K562 (cell line): ENCODE measurements at regions of chr5 and their contacts with region 1.

Region 1: DNA sequence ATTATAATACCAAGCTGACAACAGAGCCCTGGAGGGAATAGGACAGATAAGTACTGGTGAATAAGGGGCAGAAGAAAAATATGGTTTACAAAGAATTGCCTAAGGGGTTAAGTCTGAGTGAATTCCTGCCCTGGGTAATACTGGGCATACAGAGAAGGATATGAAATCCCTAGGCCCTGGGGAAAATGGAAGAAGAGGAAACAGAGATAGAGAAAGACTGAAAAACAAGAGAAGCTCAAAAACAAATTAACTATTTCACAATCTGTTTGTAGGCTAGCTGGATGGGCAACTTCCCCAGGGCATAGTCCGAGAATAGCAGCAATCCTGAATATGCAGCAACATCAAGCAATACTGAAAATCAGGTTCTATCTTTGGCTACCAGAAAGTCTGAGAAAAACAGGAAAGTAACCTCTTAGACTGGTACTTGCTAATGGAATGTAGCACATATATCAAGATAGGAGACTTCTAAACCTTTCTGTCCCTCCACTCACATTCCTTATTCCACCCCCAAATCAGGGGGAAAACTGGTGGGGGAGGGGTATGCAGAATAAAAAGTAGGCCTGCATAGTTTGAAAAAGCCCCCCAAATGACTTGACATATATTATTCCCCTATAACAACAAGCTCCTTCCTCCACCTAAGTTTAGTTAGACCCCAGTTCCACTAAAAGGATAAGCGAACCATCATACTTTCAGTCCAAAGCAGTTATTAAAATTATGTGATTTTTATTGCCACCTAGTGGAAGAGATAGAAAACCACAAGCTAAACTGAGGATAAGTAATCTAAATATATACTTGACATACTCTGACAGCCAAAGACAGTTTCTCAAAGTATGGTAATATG is 20.6 kb downstream of the SLC38A9 start:
- DNase-seq: peak; percentile 17 to 28 (median 18)
- ATAC-seq: peak; percentile 64
- H3K4me3 ChIP-seq: no peak overlapping the region
- H3K27ac ChIP-seq: no peak overlapping the region
- H3K4me1 ChIP-seq: no peaks in the 10 kb centered on the region
- H3K27me3 ChIP-seq: no peaks in the 10 kb centered on the region
- CTCF ChIP-seq: peak in 2 of 3 experiments; percentile 42 to 61; a peak in 3 of 6 replicates
- EP300 ChIP-seq: no peak
- POLR2A ChIP-seq: no peak
- RAD21 ChIP-seq: peak; percentile 56 to 67

Region 2: GRCh38 chr5:55172051-55172899 is 519.2 kb before region 1 on chr5:
- CTCF ChIA-PET with region 1: interaction called, 11 read pairs
- POLR2A ChIA-PET with region 1: interaction called, 3 read pairs
- in situ Hi-C with region 1: loop called (anchors 10 kb)
- intact Hi-C with region 1: loop called (anchors 2 kb)
- DNase-seq: peak; percentile 73 to 86 (median 76)
- ATAC-seq: peak; percentile 74
- H3K4me3 ChIP-seq: peak overlapping the region; percentile 46
- H3K27ac ChIP-seq: no peak overlapping the region
- H3K4me1 ChIP-seq: peaks cover 11 to 22% of the 10 kb centered on the region in 2 experiments
- H3K27me3 ChIP-seq: peaks cover 0 to 2% of the 10 kb centered on the region in 2 experiments; a peak in 3 of 5 replicates
- CTCF ChIP-seq: peak; percentile 75 to 91 (median 81)
- EP300 ChIP-seq: no peak
- POLR2A ChIP-seq: no peak
- RAD21 ChIP-seq: peak; percentile 93 to 94

Region 3: DNA sequence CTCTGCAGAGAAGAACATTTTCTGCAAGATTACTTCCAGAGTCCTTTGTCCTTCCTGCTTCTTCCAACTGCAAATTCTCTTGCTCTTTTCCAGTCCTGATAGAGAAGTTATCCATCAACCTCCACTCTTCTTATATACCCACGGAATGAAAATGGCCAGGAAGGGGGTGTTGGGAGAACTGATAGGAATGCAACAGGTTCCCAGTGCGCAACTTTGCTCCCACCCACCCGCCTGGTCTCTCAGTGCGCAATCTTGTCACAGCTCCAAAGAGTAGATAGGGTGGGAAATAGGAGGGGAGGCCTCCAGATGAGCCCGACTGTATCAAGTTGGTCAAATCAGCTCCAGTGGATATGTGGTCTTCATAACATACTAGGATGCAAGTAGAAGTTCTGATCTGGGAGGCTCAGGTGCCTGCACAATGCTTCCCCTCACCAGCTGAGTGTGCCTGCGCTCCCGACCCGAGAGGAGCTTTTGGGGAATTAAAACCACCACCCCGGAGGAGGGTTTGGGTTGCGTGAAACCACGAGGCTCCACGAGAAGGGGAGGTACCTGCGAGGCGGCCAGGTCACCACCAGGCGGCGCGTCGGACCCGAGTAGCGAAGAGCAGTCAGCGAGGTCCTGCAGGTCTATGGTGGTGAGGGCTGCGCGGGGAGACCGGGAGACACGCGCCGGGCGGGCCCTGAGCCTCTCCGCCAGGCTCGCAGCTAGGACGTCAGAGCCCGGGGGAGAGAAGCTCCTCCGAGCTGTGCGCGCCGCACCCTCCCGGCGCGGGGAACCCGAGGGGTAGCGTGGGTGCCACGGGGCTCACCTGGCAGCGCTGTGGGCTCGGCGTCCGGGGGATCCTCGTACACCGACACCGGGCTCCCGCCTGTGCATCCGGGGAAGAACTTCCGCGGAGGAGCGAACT is 465.2 kb before region 1 on chr5:
- CTCF ChIA-PET with region 1: interaction called, 6 read pairs
- POLR2A ChIA-PET with region 1: no interaction called
- in situ Hi-C with region 1: no loop called
- intact Hi-C with region 1: loop called (anchors 2 kb)
- DNase-seq: peak; percentile 83 to 90 (median 88)
- ATAC-seq: peak; percentile 93
- H3K4me3 ChIP-seq: peak overlapping the region; percentile 71
- H3K27ac ChIP-seq: peak overlapping the region; percentile 55; the same call in 1 of the 3 replicates
- H3K4me1 ChIP-seq: peaks cover 6 to 25% of the 10 kb centered on the region in 2 experiments; a peak in 3 of 5 replicates
- H3K27me3 ChIP-seq: peaks cover 9 to 12% of the 10 kb centered on the region in 2 experiments; a peak in 4 of 5 replicates
- CTCF ChIP-seq: peak; percentile 83 to 92 (median 88)
- EP300 ChIP-seq: no peak
- POLR2A ChIP-seq: peak; percentile 53; the same call in 1 of the 2 replicates
- RAD21 ChIP-seq: peak; percentile 51 to 83

Region 4: GRCh38 chr5:55324815-55325418 is 366.6 kb before region 1 on chr5:
- CTCF ChIA-PET with region 1: interaction called, 6 read pairs
- POLR2A ChIA-PET with region 1: no interaction called
- in situ Hi-C with region 1: no loop called
- intact Hi-C with region 1: loop called (anchors 5 kb)
- DNase-seq: peak in 2 of 4 experiments; percentile 22 to 36
- ATAC-seq: peak; percentile 77
- H3K4me3 ChIP-seq: no peak overlapping the region
- H3K27ac ChIP-seq: no peak overlapping the region
- H3K4me1 ChIP-seq: no peaks in the 10 kb centered on the region
- H3K27me3 ChIP-seq: no peaks in the 10 kb centered on the region
- CTCF ChIP-seq: peak; percentile 21 to 66 (median 28); a peak in 4 of 6 replicates
- EP300 ChIP-seq: no peak
- POLR2A ChIP-seq: no peak
- RAD21 ChIP-seq: peak; percentile 64 to 68

Region 5: GRCh38 chr5:55344392-55344992 is 347.0 kb before region 1 on chr5:
- CTCF ChIA-PET with region 1: interaction called, 5 read pairs
- POLR2A ChIA-PET with region 1: no interaction called
- in situ Hi-C with region 1: no loop called
- intact Hi-C with region 1: loop called (anchors 5 kb)
- DNase-seq: peak; percentile 30 to 66 (median 42)
- ATAC-seq: peak; percentile 68; the same call in 2 of the 3 replicates
- H3K4me3 ChIP-seq: no peak overlapping the region
- H3K27ac ChIP-seq: no peak overlapping the region
- H3K4me1 ChIP-seq: no peaks in the 10 kb centered on the region
- H3K27me3 ChIP-seq: no peaks in the 10 kb centered on the region
- CTCF ChIP-seq: peak; percentile 54 to 65 (median 64); a peak in 5 of 6 replicates
- EP300 ChIP-seq: no peak
- POLR2A ChIP-seq: no peak
- RAD21 ChIP-seq: peak in 1 of 2 experiments; percentile 53; a peak in 3 of 4 replicates

Region 6: GRCh38 chr5:55407059-55407684 is 284.3 kb before region 1 on chr5:
- CTCF ChIA-PET with region 1: interaction called, 8 read pairs
- POLR2A ChIA-PET with region 1: no interaction called
- in situ Hi-C with region 1: no loop called
- intact Hi-C with region 1: loop called (anchors 5 kb)
- DNase-seq: peak in 2 of 4 experiments; percentile 18 to 20
- ATAC-seq: peak; percentile 72
- H3K4me3 ChIP-seq: no peak overlapping the region
- H3K27ac ChIP-seq: no peak overlapping the region
- H3K4me1 ChIP-seq: no peaks in the 10 kb centered on the region
- H3K27me3 ChIP-seq: no peaks in the 10 kb centered on the region
- CTCF ChIP-seq: peak in 2 of 3 experiments; percentile 37 to 39; a peak in 4 of 6 replicates
- EP300 ChIP-seq: no peak
- POLR2A ChIP-seq: no peak
- RAD21 ChIP-seq: peak; percentile 47 to 52

Region 7: DNA sequence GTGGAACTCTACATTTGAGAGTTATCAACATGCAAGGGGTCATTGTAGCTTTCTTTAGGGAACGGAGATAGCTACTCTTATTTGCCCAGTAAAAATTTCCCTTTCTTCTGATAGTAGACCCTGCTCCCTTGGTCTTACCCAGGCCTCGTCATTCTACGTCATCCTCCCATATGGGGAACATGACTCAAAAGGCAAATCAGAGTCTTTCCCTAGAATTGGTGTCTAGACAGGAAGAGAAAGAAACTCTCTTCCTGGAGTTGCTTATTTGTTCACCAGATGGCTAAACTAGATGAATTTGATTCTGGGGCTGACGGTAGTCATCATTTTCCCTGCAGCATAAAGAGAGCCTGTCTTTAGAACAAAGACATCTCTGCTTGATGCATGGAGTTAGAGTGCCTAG is 32.8 kb after region 1 on chr5:
- CTCF ChIA-PET with region 1: no interaction called
- POLR2A ChIA-PET with region 1: no interaction called
- in situ Hi-C with region 1: no loop called
- intact Hi-C with region 1: no loop called
- DNase-seq: no peak
- ATAC-seq: no peak
- H3K4me3 ChIP-seq: no peak overlapping the region
- H3K27ac ChIP-seq: no peak overlapping the region
- H3K4me1 ChIP-seq: no peaks in the 10 kb centered on the region
- H3K27me3 ChIP-seq: no peaks in the 10 kb centered on the region; a peak in 1 of 5 replicates
- CTCF ChIP-seq: no peak
- EP300 ChIP-seq: no peak
- POLR2A ChIP-seq: no peak
- RAD21 ChIP-seq: no peak